ENCODE measurements at regions of chr1 and their contacts with region 1.

Region 1: DNA sequence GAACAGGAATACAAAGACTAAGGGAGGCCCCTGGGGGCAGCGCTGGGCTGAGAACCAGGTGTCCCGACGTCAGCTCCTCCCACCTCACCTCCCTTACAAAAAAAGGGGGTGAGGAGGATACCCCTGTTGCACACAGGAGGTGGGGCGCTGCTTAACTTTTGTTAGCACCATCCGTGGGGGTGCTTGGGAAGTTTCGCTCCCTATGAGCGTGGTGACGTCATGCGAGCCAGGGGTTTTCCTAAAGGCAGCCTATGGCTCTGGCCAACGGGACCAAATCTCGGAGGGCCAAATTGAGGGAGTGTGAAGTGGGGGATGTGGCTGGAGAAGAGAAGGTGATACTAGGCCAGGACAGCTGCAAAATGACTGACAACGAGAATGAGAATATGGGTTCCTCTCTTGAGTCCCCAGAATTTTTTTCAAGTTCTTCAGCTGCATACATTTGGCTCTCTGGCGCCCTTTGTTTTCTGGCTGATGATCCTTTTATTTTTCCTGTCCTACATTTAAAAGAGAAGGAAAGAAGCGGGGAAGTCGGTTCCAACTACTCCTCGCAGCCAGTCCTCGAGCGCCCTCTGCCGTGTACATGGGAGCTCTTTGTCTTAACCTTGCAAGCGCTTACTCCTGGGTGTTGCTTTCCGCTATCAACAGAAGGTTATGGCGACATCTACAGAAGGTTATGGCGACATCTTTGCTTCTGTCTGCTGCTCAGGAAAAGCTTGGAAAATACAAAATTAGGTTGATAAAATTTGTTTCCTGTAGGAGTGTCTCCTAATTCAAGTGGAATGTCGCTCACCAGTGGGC is 48.0 kb upstream of the ZC3H11B start:
- DNase-seq: peak; percentile 91 to 96 (median 93)
- ATAC-seq: peak; percentile 88 to 94
- H3K4me3 ChIP-seq: peak overlapping the region; percentile 44
- H3K27ac ChIP-seq: no peak overlapping the region
- H3K4me1 ChIP-seq: peaks cover 3% of the 10 kb centered on the region
- H3K27me3 ChIP-seq: no peaks in the 10 kb centered on the region

Region 2: DNA sequence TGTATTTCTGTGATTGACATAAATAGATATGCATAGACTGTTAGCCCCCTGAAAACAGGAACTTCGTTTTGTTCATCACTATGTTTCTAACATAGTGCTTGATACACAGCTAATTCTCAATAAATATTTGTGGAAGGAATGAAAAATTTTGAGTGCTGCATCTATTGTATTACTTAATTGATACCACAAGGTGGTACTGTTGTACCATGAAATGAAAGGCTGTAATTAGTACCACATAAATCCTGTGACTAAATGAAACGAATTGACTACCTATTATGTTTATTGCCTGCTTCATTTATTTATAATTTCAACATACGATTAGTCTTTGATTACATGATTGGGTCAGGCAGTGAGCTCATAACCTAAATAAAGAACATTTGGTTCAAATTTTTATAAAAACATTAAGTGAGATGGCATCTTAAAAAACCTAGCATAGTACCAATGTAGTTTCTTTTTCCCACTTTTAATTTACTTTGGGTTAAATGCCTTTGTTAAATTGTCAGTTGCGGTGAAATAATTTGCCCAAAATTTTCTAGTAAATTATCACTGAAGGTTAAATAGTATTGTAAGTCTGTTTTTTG is 1330.7 kb before region 1 on chr1:
- intact Hi-C with region 1: loop called in 2 of 4 experiments (anchors 10 kb)
- DNase-seq: no peak
- ATAC-seq: peak; percentile 29 to 53
- H3K4me3 ChIP-seq: no peak overlapping the region
- H3K27ac ChIP-seq: no peak overlapping the region
- H3K4me1 ChIP-seq: no peaks in the 10 kb centered on the region
- H3K27me3 ChIP-seq: no peaks in the 10 kb centered on the region

Region 3: DNA sequence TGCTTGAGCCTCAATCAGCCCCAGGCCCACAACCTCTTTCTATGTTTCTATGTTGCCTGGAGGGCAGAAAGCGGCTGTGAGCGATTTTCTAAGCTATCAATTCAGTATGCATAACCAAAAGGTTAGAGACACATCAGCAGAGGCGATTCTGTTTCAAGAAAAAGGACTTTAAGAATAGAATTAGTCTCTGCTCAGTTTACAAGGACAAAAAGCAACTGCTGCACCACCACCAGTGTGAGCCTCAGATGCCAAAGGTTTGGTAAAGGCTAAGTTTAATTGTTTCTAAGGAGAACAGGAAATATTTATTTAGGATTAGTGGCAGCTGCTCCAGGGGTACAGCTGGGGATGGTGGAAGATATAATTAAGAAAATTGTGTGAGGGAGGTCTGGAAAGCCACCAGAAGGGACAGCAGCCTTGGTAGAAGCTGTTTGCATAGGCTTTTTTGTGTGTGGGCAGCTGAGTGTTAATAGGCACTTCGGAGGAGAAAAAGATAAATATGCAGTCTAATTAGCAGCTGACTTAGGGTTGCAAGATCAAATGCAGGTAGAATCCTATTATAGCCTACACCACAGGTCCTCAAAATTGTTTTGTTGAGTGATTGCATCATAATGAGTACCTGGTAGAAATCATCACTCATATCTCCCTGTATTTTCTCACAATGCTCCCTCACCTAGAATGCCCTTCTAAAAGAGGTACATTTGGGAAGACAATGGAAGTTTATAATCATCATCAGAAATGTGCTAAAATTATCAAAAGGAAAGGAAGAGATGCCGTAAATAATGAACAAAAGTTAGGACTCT is 83.7 kb before region 1 on chr1:
- intact Hi-C with region 1: loop called in 1 of 4 experiments (anchors 10 kb)
- DNase-seq: no peak
- ATAC-seq: no peak
- H3K4me3 ChIP-seq: no peak overlapping the region
- H3K27ac ChIP-seq: no peak overlapping the region
- H3K4me1 ChIP-seq: no peaks in the 10 kb centered on the region
- H3K27me3 ChIP-seq: no peaks in the 10 kb centered on the region

Region 4: DNA sequence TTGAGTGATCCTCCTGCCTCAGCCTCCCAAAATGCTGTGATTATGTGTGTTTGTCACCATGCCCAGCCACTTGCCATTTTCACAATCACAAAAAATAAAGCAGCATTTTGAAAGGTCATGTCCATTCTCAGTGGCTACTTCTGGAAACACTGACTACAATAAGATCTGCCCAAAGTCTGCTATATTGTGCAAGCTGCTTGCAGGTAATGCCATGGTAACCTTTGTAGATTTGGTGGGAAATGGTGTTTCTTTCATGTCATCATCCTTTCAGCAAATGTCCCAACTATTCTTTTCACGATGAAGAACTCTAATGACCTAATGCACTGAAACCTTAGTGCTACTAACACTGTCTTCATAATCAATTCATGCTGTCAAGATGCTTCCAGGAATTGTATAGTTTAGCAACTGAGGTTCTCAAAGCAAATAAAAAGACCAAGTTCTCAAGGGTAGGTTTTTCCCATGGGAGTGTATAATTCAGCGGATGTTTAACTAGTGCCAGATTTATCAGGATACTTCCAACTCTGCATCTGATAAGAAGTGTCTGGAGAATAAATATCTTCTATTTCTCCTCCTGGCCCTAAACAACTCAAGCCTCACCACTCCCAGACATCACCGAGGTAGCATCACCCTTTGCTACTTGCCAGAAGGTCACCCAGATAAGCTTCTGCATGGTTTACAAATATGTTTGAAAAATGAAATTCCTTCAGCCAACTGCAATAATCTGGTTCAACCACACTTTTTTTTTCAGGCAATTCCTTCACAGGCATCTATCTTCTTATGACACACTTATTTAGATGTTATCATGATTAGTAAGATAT is 84.0 kb after region 1 on chr1:
- intact Hi-C with region 1: loop called in 1 of 4 experiments (anchors 10 kb)
- DNase-seq: no peak
- ATAC-seq: no peak
- H3K4me3 ChIP-seq: no peak overlapping the region
- H3K27ac ChIP-seq: no peak overlapping the region
- H3K4me1 ChIP-seq: no peaks in the 10 kb centered on the region
- H3K27me3 ChIP-seq: no peaks in the 10 kb centered on the region

Region 5: GRCh38 chr1:219798283-219799030 is 137.6 kb after region 1 on chr1:
- intact Hi-C with region 1: loop called in 2 of 4 experiments (anchors 10 kb)
- DNase-seq: no peak
- ATAC-seq: no peak
- H3K4me3 ChIP-seq: no peak overlapping the region
- H3K27ac ChIP-seq: no peak overlapping the region
- H3K4me1 ChIP-seq: no peaks in the 10 kb centered on the region
- H3K27me3 ChIP-seq: no peaks in the 10 kb centered on the region